ENCODE measurements at regions of chr17 and their contacts with region 1.

Region 1: DNA sequence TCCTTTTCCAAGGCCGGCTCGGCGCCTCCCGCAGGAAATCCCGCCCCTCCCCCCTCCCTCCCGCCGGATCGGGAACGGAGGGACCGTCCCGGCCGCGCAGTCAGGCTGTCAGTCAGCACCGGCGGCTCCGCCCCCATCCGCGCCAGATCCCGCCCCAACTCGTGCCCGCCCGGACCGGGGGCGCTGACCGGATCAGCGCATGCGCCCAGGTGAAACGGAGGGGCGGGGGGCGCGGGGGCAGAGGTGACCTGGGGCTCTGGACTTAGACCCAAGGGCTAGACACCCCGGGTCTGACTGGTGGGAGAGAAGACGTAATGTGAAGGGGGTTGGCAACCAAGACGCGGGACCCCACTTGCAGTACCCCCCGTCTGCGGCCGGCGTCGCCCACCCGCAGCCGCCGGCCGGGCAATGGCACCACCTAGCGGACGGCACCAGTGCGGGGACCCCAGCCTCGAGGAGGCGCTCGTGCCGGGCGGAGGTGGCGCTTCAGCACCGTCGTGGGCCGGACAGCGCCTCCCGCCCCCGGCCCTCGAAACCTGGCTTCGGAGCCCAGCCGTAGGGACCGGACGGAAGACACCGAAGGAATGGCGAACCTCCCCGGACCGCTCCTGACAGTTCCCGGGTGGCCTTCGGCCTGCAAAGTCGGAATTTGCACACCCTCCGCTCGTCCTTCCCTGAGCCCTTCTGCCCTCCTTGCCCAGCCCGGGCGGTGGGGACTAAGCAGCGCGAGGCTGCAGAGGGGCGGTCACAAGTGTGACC is at the start of gene CASKIN2:
- DNase-seq: peak; percentile 91
- H3K4me3 Mint-ChIP-seq: peak within 1 kb of the TSS; percentile 81
- H3K27ac Mint-ChIP-seq: no peak within 1 kb of the TSS
- H3K4me1 Mint-ChIP-seq: peaks cover 11% of the 10 kb centered on the region
- H3K27me3 Mint-ChIP-seq: no peaks in the 10 kb centered on the region
- CTCF ChIP-seq: peak; percentile 96
- total RNA-seq, gene CASKIN2: 19.2 and 19.8 TPM in 2 replicates

Region 2: GRCh38 chr17:75271233-75271954 is 244.3 kb before region 1 on chr17:
- CTCF ChIA-PET with region 1: no interaction called
- POLR2A ChIA-PET with region 1: interaction called, 3 read pairs
- intact Hi-C with region 1: loop called (anchors 2 kb)
- DNase-seq: peak; percentile 74
- H3K4me3 Mint-ChIP-seq: peak overlapping the region; percentile 74
- H3K27ac Mint-ChIP-seq: peak overlapping the region; percentile 39
- H3K4me1 Mint-ChIP-seq: peaks cover 23% of the 10 kb centered on the region
- H3K27me3 Mint-ChIP-seq: no peaks in the 10 kb centered on the region
- CTCF ChIP-seq: peak; percentile 67

Region 3: GRCh38 chr17:75456417-75457046 is 59.1 kb before region 1 on chr17 and contains the start of gene TMEM94:
- CTCF ChIA-PET with region 1: no interaction called
- POLR2A ChIA-PET with region 1: interaction called, 15 read pairs
- intact Hi-C with region 1: no loop called
- DNase-seq: peak; percentile 98
- H3K4me3 Mint-ChIP-seq: peak within 1 kb of the TSS; percentile 86
- H3K27ac Mint-ChIP-seq: peak within 1 kb of the TSS; percentile 90
- H3K4me1 Mint-ChIP-seq: peaks cover 22% of the 10 kb centered on the region
- H3K27me3 Mint-ChIP-seq: no peaks in the 10 kb centered on the region
- CTCF ChIP-seq: no peak
- total RNA-seq, gene TMEM94: 42.8 and 46.5 TPM in 2 replicates

Region 4: GRCh38 chr17:75589012-75589918 is 73.6 kb after region 1 on chr17:
- CTCF ChIA-PET with region 1: interaction called, 7 read pairs
- POLR2A ChIA-PET with region 1: interaction called, 3 read pairs
- intact Hi-C with region 1: loop called (anchors 2 kb)
- DNase-seq: peak; percentile 85
- H3K4me3 Mint-ChIP-seq: peak overlapping the region; percentile 71
- H3K27ac Mint-ChIP-seq: no peak overlapping the region
- H3K4me1 Mint-ChIP-seq: no peaks in the 10 kb centered on the region
- H3K27me3 Mint-ChIP-seq: no peaks in the 10 kb centered on the region
- CTCF ChIP-seq: peak; percentile 48